Spleen (tissue), 13 donors: ENCODE measurements at regions of chr15 and their contacts with region 1.

Region 1: DNA sequence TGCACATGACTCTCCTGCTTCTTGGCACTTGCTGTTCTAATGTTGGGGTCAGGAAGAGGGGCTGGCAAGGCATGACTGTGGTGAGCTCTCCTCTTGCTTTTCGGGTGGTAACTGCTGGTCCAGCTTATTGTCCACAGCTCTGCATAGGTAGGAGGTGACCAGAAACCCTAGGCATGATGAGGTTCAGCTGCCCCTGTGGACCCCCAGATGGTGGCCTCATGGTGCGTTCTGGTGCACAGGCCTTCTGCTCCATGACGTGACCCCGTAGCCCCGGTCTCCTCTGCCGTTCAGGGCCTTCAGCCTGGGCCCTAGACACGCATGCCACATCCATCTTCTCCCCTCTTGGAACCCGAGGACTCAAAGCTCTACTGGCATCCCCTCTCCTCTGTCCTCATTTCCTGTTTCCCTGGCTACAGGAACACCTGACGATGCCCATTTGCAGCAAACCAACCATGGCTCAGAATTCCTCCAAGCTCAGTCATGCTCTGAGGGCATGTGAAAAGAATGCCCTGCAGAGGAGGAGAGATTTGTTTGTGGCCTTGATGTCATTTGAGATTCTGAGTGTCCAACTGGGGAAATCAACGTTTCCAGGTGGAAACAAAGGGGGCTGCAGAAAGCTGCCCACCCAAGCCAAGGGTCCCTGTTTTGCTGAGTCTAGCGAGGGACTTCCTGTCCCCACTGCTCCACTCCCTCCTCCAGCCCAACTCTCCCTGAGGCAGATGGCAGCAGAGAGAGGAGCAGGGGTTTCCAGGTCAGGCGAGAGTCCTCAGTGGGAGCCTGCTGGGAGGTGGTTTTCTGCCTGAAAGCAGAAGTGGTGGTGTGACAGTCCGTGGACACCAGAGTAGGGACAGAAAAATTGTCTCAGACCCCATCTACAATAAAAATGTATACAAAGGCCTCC is 198.7 kb upstream of the LYSMD4 start:
- DNase-seq: no peak
- H3K4me3 ChIP-seq: no peak overlapping the region
- H3K27ac ChIP-seq: no peak overlapping the region
- H3K4me1 ChIP-seq: peaks cover 0 to 13% (median 9%) of the 10 kb centered on the region in 6 donors
- H3K27me3 ChIP-seq: peaks cover 0 to 10% (median 0%) of the 10 kb centered on the region in 7 donors
- CTCF ChIP-seq: no peak
- POLR2A ChIP-seq: no peak

Region 2: DNA sequence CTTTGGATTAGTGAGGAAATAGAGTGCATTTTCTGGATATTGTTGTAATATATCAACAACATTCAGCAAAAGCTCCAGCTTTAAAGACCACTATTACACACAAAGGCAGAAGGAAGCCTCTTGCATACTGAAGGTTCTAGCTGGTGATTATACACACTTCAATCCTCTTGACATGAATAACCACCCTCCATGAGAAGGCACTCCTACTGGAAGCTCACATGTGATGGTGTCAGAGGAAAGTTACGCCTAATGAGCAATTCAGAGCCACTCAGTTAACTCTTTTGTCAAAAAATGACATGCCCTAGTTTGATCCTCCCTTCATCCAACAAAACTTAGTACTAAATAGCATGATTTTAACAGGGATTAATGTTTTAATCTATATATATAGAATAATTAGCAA is 74.1 kb before region 1 on chr15:
- intact Hi-C with region 1: no loop called
- DNase-seq: no peak
- H3K4me3 ChIP-seq: no peak overlapping the region
- H3K27ac ChIP-seq: no peak overlapping the region
- H3K4me1 ChIP-seq: no peaks in the 10 kb centered on the region
- H3K27me3 ChIP-seq: no peaks in the 10 kb centered on the region
- CTCF ChIP-seq: no peak
- POLR2A ChIP-seq: no peak

Region 3: DNA sequence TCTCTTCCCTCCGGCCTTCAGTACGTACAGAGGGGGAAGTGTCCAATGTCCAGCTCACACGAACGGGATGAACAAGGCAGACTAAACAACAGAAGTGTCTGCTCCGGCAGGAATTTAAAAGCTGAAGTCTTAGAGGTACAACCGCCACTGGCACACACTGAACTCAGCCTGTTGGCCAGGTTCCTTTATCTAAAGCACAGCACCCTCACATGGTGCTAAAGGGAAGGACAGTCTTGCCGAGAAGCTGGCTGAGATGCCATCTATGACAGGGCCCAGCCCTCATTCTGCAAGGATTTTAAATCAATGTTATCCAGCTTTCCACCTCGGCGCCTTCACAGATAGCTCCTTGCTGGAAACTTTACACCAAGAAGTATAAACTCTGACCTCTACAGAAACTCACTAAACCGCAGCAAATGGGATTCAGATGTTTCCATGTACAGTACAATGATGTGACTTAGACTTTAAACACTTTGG is 407.1 kb after region 1 on chr15:
- intact Hi-C with region 1: loop called (anchors 5 kb)
- DNase-seq: no peak
- H3K4me3 ChIP-seq: peak overlapping the region in 1 of 8 donors; percentile 25
- H3K27ac ChIP-seq: no peak overlapping the region
- H3K4me1 ChIP-seq: peaks cover 0 to 52% (median 11%) of the 10 kb centered on the region in 6 donors
- H3K27me3 ChIP-seq: peaks cover 0 to 85% (median 15%) of the 10 kb centered on the region in 7 donors
- CTCF ChIP-seq: peak; percentile 34 to 79 (median 66)
- POLR2A ChIP-seq: no peak

Region 4: GRCh38 chr15:100588638-100589242 is 656.8 kb after region 1 on chr15:
- intact Hi-C with region 1: loop called (anchors 10 kb)
- DNase-seq: no peak
- H3K4me3 ChIP-seq: no peak overlapping the region
- H3K27ac ChIP-seq: no peak overlapping the region
- H3K4me1 ChIP-seq: peaks cover 0 to 17% (median 0%) of the 10 kb centered on the region in 6 donors
- H3K27me3 ChIP-seq: no peaks in the 10 kb centered on the region
- CTCF ChIP-seq: no peak
- POLR2A ChIP-seq: no peak